H1 (cell line): ENCODE measurements at regions of chr1 and their contacts with region 1.

Region 1: DNA sequence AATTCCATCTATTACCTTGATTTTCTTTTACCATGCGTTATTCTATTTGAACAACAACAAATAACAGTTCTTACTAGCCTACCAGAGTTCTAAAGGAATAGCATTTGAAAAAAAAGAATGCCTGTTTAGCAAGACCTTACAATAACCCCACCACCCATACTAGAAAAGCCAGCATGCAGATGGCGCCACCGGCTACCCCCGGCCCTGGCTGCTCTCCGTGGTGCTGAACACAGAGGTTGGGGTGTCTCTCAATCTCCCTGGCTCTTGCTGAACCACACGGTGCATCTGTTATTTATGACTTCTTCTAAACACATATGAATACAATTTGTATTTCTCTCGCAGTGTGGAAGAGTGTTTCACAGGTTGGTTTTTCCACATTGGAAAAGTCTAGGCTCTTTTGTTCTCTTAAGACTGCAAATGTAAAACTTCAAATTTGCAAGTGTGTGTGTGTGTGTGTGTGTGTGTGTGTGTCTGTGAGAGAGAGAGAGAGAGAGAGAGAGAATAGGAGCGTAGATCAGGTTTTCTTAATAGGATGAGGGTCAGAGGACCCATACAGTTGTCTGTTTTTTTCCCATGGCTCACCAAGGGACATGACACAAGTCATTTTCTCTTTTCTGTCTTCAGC is 13.6 kb downstream of the GRIK3 start:
- DNase-seq: peak in 1 of 2 experiments; percentile 89
- H3K4me3 ChIP-seq: no peak overlapping the region
- H3K27ac ChIP-seq: no peak overlapping the region
- H3K4me1 ChIP-seq: no peaks in the 10 kb centered on the region
- H3K27me3 ChIP-seq: no peaks in the 10 kb centered on the region
- CTCF ChIP-seq: peak; percentile 35 to 52 (median 52)
- EP300 ChIP-seq: no peak
- POLR2A ChIP-seq: no peak
- RAD21 ChIP-seq: peak; percentile 42 to 53

Region 2: DNA sequence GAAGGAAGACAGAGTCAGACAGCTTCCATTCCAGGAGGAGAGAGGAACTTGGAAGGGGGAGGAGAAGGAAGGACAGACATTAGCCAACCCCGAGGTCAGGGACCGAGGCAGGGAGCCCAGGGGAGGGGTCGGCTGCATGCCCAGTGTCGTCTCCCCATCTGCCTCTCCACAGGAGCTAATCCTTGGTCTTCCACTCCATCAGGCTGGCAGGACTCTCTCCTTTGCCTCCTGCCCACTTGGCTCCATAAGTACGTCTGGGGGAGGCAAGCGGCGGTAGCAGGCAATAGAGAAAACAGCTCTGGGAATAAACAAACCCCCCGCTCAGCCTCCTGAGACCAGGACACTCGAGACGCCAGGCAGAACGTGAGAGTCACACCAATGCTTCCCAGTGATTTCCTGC is 57.8 kb before region 1 on chr1:
- CTCF ChIA-PET with region 1: no interaction called
- POLR2A ChIA-PET with region 1: no interaction called
- DNase-seq: no peak
- H3K4me3 ChIP-seq: no peak overlapping the region
- H3K27ac ChIP-seq: no peak overlapping the region
- H3K4me1 ChIP-seq: no peaks in the 10 kb centered on the region
- H3K27me3 ChIP-seq: no peaks in the 10 kb centered on the region
- CTCF ChIP-seq: no peak
- EP300 ChIP-seq: no peak
- POLR2A ChIP-seq: no peak
- RAD21 ChIP-seq: no peak

Region 3: DNA sequence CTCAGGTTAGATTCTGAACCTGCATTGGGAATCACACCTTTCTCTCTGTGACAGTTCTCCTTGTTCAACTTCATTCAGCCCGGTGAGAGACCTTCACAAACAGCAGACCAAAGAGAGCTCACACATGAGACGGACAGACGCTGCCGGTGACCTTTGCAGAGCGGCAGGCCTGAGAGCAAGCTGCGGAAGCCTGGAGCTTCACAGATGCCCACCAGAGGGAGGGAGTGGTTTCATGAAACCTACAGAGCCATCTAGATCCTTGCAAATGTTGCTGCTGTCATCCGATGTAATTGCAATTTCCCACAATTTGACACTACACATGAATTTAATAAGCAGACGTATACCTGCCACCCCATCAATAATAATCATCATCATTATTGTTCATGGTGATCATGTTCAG is 25.9 kb before region 1 on chr1:
- CTCF ChIA-PET with region 1: interaction called, 13 read pairs
- POLR2A ChIA-PET with region 1: no interaction called
- DNase-seq: no peak
- H3K4me3 ChIP-seq: no peak overlapping the region
- H3K27ac ChIP-seq: no peak overlapping the region
- H3K4me1 ChIP-seq: no peaks in the 10 kb centered on the region; a peak in 1 of 7 replicates
- H3K27me3 ChIP-seq: no peaks in the 10 kb centered on the region
- CTCF ChIP-seq: peak; percentile 25 to 39 (median 30)
- EP300 ChIP-seq: no peak
- POLR2A ChIP-seq: no peak
- RAD21 ChIP-seq: peak in 1 of 2 experiments; percentile 46; a peak in 2 of 4 replicates

Region 4: DNA sequence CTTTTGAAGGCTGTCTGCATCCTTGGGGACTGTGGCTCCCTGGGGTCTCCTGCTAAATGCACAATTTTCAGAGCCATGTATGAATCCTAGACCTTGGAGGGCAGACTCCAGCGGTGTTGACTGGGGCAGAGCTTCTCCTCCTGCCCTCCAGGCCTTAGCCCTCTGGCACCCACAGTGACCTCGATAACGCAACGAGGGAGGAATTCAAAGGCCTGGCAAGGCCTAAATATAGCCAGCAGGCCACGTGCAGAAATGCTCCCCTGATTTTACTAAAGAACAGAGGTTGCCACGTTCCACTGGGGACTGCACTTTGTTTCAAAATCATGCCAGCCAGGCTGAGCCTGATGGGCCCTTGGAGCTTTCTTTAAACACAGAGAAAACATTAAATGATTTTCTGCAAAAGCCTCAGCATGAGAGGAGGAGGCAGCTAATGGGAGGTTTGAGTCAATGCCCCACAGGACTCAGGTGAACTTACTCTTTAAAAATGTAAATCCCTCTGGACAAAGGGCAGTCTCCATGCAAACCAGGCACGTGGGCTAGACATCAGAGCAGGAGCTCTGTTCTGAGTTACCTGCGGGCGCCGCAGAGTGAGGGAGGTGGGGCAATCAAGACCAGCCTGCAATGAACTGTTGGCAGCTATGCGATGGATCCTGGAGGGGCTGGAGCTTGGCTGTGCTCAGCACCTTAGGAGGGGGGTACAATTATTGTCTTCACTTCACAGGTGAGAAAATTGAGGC is 14.5 kb before region 1 on chr1:
- CTCF ChIA-PET with region 1: interaction called, 10 read pairs
- POLR2A ChIA-PET with region 1: no interaction called
- DNase-seq: no peak
- H3K4me3 ChIP-seq: no peak overlapping the region
- H3K27ac ChIP-seq: no peak overlapping the region; the same call in 1 of the 2 replicates
- H3K4me1 ChIP-seq: peaks cover 0 to 11% (median 8%) of the 10 kb centered on the region in 4 experiments; a peak in 4 of 7 replicates
- H3K27me3 ChIP-seq: no peaks in the 10 kb centered on the region; a peak in 1 of 7 replicates
- CTCF ChIP-seq: no peak
- EP300 ChIP-seq: no peak
- POLR2A ChIP-seq: no peak
- RAD21 ChIP-seq: no peak

Region 5: DNA sequence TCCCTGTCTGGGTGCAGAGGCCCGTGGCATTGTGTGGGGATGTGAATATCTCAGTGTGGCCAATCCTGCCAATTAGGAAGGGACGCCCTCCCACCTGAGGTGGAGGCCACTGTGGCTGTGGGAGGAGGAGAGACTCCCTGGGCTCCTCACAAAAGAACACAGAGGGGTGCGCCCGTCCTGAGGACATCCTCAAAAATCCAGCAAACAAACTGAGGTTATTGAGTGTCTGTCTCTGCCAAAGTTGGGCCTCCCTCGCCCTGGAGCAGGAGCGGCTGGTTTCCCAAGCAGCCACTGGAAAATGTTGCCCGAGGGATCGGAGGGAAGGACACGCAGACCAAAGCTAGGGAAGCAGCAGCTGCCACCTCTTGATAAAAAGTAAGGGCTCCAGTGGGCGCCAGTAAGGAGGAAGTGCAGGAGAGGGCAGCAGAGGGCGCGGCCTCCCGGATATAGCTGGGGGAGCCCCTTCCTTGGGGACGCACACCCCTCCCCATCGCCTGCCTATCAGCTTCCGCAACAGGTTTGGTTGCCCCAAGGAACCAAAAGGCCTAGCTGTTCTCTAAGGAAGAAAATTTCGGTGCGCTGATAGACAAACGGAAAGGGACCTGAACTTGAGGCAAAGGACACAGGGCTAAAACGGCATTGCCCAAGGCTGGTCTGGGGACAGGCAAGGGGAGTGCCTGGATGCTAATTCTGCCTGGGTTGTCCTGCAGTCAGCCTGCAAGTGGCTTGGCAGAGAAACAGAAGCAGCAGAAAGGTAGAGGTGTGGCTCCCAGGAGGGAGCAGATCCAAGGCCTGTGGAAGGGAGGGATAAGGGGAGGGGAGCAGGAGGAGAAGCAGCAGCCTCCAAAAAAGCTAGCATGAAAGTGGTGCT is 15.3 kb after region 1 on chr1:
- CTCF ChIA-PET with region 1: interaction called, 11 read pairs
- POLR2A ChIA-PET with region 1: no interaction called
- DNase-seq: peak in 1 of 2 experiments; percentile 75
- H3K4me3 ChIP-seq: peak overlapping the region; percentile 1 to 67 (median 28); a peak in 7 of 8 replicates
- H3K27ac ChIP-seq: no peak overlapping the region
- H3K4me1 ChIP-seq: peaks cover 20 to 64% (median 46%) of the 10 kb centered on the region in 4 experiments
- H3K27me3 ChIP-seq: peaks cover 35 to 55% (median 48%) of the 10 kb centered on the region in 4 experiments
- CTCF ChIP-seq: peak; percentile 39 to 43 (median 42)
- EP300 ChIP-seq: no peak
- POLR2A ChIP-seq: no peak
- RAD21 ChIP-seq: peak; percentile 26 to 37; a peak in 3 of 4 replicates